Upper lobe of right lung (tissue), 1 donor: ENCODE measurements at regions of chr7 and their contacts with region 1.

Region 1: DNA sequence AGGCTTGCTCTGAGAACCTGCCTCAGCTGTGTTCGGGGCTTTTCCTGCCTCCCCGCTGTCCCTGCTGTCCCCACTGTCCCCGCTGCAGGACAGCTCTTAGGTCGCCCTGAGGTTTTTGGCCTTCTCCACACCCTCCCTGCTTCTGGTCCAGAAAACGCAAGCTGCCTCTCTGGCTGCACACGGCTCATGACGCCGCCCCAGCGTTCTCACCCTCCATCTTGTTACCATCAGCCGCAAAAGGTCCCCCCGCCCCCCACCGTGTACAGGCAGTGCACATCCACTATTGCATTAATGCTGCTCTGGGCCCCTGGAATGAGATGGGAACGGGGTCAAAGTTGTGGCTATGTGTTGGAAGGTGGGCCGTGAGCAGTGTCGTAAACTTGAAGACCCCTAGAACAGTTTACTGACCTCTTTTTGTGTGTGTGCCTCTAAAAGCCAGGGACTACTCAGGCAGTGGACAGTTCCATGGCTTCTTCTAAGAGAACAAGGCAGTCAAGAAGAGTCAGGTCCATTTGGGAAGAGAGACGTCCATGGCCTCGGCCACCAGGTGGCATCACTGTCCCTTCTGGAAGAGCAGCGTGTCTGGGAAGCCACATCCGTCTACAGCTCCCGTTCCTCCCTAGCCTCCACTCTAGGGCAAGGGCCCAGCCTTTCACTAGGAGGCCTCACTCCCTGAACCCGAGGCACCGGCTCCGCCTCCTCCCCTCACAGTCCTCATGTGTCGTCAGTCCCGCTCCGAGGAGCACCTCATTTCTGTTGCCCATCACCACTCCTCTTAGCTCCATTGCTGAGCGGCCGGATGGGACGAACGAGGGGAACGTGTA is 38.5 kb upstream of the MKRN1 start:
- DNase-seq: peak; percentile 92
- ATAC-seq: peak; percentile 98
- H3K4me3 ChIP-seq: no peak overlapping the region
- H3K27ac ChIP-seq: no peak overlapping the region
- H3K4me1 ChIP-seq: no peaks in the 10 kb centered on the region
- H3K27me3 ChIP-seq: no peaks in the 10 kb centered on the region
- CTCF ChIP-seq: peak; percentile 83

Region 2: DNA sequence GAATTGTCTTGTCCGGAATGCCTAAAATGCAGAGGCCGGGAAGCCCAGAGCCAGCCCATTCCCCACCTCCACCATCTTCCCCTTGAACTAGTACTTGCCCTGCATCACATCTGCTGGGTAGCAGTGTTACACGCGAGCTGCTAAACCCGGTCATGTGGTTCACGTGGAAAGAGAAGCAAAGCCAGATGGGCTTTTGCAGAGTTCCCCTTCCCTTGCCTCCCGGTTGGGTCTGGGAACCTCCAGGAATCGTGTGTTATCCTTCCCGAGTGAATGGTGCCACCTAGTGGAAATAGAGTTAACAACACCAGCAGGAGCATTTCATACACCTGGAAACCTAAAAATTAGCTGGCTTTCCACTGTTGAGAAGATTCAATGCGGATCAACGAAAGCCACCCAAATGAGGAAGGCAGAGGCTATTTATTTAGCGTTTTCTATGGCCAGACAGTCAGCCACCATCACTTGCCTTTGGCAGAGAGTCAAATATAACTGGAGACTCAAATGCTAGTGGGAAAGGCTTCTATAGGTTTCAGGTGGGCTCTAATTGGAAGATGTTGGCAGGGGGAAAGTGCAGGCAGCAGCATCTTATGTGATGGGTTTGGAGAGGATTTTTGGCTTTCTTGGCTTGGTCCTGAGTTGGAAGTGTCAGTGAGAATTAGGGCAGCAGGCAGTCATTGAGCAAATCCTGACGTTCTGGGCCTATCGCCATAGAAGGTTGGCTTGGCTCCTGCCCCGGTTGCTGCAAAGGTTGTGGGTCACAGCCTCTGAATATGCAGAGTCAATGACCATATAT is 135.8 kb after region 1 on chr7:
- intact Hi-C with region 1: loop called (anchors 5 kb)
- DNase-seq: peak; percentile 61
- ATAC-seq: peak; percentile 81
- H3K4me3 ChIP-seq: no peak overlapping the region
- H3K27ac ChIP-seq: no peak overlapping the region
- H3K4me1 ChIP-seq: peaks cover 14% of the 10 kb centered on the region
- H3K27me3 ChIP-seq: no peaks in the 10 kb centered on the region
- CTCF ChIP-seq: peak; percentile 86